ENCODE measurements at regions of chr10 and their contacts with region 1.

Region 1: DNA sequence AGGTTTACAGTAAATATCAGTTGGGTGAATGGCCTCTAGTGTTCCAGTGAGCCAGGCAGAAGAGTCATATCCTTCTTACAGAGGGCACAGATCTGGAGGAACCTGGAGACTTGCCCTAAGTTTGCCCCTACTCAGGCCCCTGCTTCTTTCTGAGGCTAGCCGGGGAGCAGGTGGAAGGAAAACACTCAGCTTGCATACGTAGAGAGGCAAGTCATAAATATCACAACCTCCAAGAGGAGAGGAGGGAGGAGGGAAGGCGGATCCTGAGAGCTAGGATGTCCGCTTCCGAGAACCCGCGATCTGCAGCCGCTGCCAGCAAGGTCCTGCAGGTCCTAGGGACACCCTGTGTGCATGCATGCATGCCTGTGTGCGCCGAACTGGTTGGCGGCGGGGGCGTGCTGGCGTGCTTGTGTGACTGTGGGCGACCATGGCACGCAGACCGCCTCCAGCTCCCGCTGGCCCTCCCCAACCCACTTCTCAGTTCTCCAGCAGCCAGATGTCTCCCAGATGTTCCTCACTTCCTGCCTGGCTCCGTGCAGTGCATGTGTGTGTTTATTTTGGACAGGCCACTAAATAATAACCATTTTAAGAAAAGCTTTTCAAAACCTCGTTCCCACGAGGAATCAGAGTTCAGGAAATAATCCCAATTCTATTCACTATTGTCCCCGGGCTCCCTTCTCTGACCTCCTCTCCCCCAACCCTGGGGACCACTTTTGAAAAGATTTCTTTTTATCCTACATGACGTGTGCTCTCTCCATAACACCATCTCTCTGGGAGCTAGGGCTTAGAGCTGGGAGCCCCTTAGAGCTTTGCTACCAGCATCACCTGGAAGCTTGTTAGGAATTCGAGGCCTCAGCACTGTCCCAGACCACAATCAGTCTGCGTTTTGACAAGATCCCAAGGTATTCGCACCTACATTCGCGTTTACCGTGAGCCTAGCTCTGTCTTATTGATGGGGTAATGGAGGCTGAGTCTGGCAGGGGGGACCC is 32.4 kb downstream of the UNC5B start:
- DNase-seq: peak; percentile 81
- H3K4me3 ChIP-seq: no peak overlapping the region; a peak in 2 of 4 replicates
- H3K27ac ChIP-seq: peak overlapping the region; percentile 60 to 100; a peak in 3 of 4 replicates
- H3K4me1 ChIP-seq: peaks cover 60 to 99% of the 10 kb centered on the region in 2 experiments
- H3K27me3 ChIP-seq: no peaks in the 10 kb centered on the region
- CTCF ChIP-seq: no peak
- EP300 ChIP-seq: peak; percentile 7 to 50; a peak in 2 of 4 replicates
- RAD21 ChIP-seq: no peak; the same call in 1 of the 2 replicates

Region 2: DNA sequence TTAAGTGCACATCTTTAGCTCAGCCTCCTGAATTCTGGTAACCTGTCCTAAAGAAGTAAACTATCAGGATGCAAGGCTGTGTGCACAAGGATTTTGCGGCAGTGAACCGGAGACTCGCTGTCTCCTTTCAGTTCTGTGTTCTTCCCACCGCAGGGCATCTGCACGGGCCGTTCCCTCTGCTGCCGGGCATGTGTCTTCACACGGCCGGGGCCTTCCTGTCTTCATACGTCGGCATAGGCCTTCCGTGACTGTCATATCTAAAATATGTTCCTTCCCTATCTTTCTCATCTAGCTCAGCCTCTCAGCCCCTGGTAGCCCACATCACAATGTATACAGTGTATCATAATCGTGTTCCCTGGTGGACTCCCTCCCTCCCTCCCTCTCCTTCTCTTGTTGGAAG is 749.8 kb before region 1 on chr10:
- CTCF ChIA-PET with region 1: no interaction called
- POLR2A ChIA-PET with region 1: no interaction called
- DNase-seq: no peak
- H3K4me3 ChIP-seq: no peak overlapping the region
- H3K27ac ChIP-seq: no peak overlapping the region
- H3K4me1 ChIP-seq: peaks cover 0 to 11% of the 10 kb centered on the region in 2 experiments; a peak in 1 of 4 replicates
- H3K27me3 ChIP-seq: no peaks in the 10 kb centered on the region
- CTCF ChIP-seq: no peak
- EP300 ChIP-seq: no peak
- RAD21 ChIP-seq: no peak

Region 3: GRCh38 chr10:71222601-71223346 is 22.0 kb before region 1 on chr10:
- CTCF ChIA-PET with region 1: interaction called, 71 read pairs
- POLR2A ChIA-PET with region 1: interaction called, 35 read pairs
- DNase-seq: no peak
- H3K4me3 ChIP-seq: no peak overlapping the region; a peak in 1 of 4 replicates
- H3K27ac ChIP-seq: peak overlapping the region; percentile 29 to 98
- H3K4me1 ChIP-seq: peaks cover 44 to 75% of the 10 kb centered on the region in 2 experiments
- H3K27me3 ChIP-seq: no peaks in the 10 kb centered on the region
- CTCF ChIP-seq: peak; percentile 27; the same call in 1 of the 2 replicates
- EP300 ChIP-seq: 0 out of 4 replicates have a peak, but pooled peaks of 1 of the 2 experiments have one; percentile 24
- RAD21 ChIP-seq: no peak

Region 4: GRCh38 chr10:71255808-71256660 is 11.3 kb after region 1 on chr10:
- CTCF ChIA-PET with region 1: interaction called, 12 read pairs
- POLR2A ChIA-PET with region 1: interaction called, 17 read pairs
- DNase-seq: peak; percentile 74
- H3K4me3 ChIP-seq: no peak overlapping the region
- H3K27ac ChIP-seq: peak overlapping the region; percentile 53 to 100
- H3K4me1 ChIP-seq: peaks cover 56 to 97% of the 10 kb centered on the region in 2 experiments
- H3K27me3 ChIP-seq: no peaks in the 10 kb centered on the region
- CTCF ChIP-seq: no peak
- EP300 ChIP-seq: peak in 1 of 2 experiments; percentile 81; a peak in 3 of 4 replicates
- RAD21 ChIP-seq: 0 out of 2 replicates have a peak, but pooled peaks have one; percentile 20

Region 5: DNA sequence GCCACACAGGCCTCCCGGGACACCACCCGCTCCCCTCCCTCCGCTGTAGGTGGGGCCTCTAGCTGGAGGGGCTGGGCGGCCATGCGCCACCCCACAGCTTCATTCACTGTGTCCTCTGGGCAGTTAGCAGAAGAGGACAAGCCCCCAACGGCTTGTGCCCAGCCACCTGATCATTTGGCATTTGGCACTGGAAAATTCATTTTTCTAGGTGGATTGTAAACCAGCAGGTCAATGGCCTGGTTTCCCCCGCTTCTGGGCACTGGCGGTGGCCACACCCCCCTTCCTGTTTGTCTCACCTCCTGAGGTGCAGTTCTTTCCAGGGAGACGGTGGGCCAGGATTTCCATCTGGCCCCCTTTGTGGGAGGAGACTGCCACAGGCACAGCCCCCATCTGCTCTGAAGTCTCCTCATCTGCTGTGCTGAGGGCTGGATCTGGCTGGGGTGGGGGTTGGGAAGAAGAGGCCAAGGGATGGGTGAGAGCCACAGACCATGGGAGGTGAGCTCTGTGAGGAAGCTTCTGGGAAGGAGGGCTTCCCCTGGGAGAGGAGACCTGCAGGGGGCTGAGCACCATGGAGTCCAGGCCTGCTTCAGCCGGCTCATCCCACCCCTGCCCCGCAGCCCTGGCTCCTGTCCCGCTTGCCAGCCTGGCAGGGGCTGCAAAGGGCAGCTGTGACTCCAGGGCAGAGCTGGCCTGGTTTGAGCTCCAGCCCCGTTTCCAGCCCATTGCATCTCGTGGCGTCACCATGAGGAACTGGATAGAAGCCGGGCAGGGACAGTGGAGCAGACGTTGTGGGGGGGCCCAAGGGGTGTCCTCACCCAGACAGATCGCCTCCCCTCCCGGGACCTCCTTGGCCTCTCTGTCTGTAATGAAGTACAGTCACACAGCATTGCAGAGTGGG is 34.2 kb after region 1 on chr10:
- CTCF ChIA-PET with region 1: interaction called, 139 read pairs
- POLR2A ChIA-PET with region 1: interaction called, 28 read pairs
- DNase-seq: peak; percentile 90
- H3K4me3 ChIP-seq: no peak overlapping the region; a peak in 1 of 4 replicates
- H3K27ac ChIP-seq: peak overlapping the region in 1 of 2 experiments; percentile 99; a peak in 2 of 4 replicates
- H3K4me1 ChIP-seq: peaks cover 0 to 67% of the 10 kb centered on the region in 2 experiments; a peak in 3 of 4 replicates
- H3K27me3 ChIP-seq: no peaks in the 10 kb centered on the region
- CTCF ChIP-seq: no peak
- EP300 ChIP-seq: peak in 1 of 2 experiments; percentile 91; a peak in 2 of 4 replicates
- RAD21 ChIP-seq: peak; percentile 23; the same call in 1 of the 2 replicates

Region 6: GRCh38 chr10:71302874-71303568 is 58.3 kb after region 1 on chr10:
- CTCF ChIA-PET with region 1: no interaction called
- POLR2A ChIA-PET with region 1: no interaction called
- DNase-seq: peak; percentile 61
- H3K4me3 ChIP-seq: no peak overlapping the region; a peak in 1 of 4 replicates
- H3K27ac ChIP-seq: no peak overlapping the region
- H3K4me1 ChIP-seq: no peaks in the 10 kb centered on the region; a peak in 1 of 4 replicates
- H3K27me3 ChIP-seq: no peaks in the 10 kb centered on the region
- CTCF ChIP-seq: peak; percentile 60
- EP300 ChIP-seq: no peak
- RAD21 ChIP-seq: peak; percentile 37; the same call in 1 of the 2 replicates